MCF 10A (cell line): ENCODE measurements at regions of chr2 and their contacts with region 1.

Region 1: DNA sequence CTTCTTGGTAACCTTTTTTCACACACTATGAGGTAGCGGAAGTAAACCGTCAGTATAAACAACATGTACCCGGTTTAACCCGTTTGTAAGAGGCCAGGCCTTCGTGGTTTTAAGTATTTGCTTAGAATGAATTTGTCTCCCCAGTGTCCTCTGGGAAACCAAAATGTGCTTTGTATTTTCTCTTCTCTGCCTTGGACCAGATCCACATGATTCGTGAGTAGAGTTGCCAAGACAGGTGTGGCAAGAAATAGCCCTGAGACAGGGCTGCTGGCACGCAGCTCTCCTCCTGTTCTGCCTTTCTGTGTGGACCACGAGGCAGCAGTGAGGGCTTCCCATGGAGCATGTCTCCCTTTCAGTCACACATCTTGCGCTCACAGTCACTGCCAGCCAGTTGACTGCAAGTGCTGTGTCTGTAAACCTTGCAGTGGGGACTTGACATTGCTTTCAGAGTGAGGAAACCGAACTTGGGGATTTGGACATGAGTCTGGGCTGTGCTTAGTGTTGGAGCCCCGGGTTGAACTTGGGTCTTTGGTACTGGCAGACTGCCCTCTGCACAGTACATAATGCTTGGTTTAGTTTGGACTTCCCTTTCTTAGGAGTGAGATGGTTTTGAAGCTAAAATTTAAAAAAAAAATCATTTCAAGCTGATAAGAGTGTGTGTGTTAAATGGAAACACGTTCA is 19.1 kb downstream of the BCL2L11 start:
- DNase-seq: peak; percentile 77
- H3K4me3 Mint-ChIP-seq: no peak overlapping the region
- H3K27ac Mint-ChIP-seq: peak overlapping the region; percentile 42
- H3K4me1 Mint-ChIP-seq: peaks cover 21% of the 10 kb centered on the region
- H3K27me3 Mint-ChIP-seq: no peaks in the 10 kb centered on the region
- CTCF ChIP-seq: no peak

Region 2: DNA sequence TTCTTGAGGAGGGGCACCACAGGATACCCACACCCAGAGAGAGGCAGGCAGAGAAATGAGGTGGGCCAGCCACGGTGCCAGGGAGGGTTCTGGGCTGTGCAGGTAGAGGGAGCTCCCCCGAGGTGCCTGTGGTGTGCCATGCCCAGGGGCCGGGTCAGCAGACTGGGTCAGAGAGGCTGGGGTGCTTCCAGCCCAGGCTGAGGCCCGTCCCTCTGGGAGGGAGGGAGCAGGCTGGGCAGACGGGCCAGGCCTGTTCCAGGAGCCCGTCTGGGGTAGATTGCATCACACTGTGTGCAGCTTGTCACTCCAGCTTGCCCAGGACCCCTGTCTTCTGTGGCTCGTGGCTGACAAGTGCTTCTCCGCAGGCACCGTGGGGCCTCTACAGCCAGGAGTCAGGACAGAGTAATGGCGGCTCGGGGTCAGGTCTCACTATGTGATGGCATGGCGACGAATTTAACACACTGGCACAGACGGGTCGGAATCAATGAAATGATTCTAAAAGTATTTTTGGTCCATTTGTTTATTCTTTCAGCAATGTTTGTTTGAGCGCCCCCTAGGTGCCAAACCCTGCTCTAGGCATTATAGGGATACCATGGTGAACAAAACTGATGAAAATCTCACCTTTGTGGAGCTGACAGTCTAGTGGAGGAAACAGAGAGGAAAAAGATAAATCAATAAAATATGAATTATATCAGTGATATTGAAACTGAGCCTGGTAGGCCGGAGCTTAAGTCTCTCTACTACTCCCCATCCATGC is 263.4 kb before region 1 on chr2:
- CTCF ChIA-PET with region 1: no interaction called
- POLR2A ChIA-PET with region 1: no interaction called
- intact Hi-C with region 1: no loop called
- DNase-seq: no peak
- H3K4me3 Mint-ChIP-seq: no peak overlapping the region
- H3K27ac Mint-ChIP-seq: no peak overlapping the region
- H3K4me1 Mint-ChIP-seq: no peaks in the 10 kb centered on the region
- H3K27me3 Mint-ChIP-seq: peaks cover 28% of the 10 kb centered on the region
- CTCF ChIP-seq: peak; percentile 11

Region 3: DNA sequence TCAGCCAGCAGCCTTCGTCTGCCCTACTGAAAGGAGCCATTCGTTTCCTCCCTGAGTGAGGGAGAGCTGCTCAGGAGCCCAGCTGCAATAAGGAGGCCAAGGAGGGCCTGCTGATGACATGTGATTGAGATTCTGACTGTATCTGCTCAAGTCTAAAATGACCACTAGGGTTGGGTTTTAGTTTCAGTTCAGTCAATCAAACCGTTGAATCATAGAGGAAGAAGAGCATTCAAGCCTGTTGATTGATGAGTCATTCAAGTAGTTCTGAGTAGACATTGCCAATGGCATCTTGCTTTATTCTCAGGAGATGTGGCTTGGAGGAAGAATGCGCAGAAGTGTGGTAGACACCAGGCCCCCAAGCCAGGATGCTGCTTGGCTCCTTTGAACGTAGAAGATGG is 39.0 kb before region 1 on chr2:
- CTCF ChIA-PET with region 1: no interaction called
- POLR2A ChIA-PET with region 1: no interaction called
- intact Hi-C with region 1: no loop called
- DNase-seq: peak; percentile 54
- H3K4me3 Mint-ChIP-seq: no peak overlapping the region
- H3K27ac Mint-ChIP-seq: no peak overlapping the region
- H3K4me1 Mint-ChIP-seq: peaks cover 6% of the 10 kb centered on the region
- H3K27me3 Mint-ChIP-seq: peaks cover 3% of the 10 kb centered on the region
- CTCF ChIP-seq: no peak

Region 4: DNA sequence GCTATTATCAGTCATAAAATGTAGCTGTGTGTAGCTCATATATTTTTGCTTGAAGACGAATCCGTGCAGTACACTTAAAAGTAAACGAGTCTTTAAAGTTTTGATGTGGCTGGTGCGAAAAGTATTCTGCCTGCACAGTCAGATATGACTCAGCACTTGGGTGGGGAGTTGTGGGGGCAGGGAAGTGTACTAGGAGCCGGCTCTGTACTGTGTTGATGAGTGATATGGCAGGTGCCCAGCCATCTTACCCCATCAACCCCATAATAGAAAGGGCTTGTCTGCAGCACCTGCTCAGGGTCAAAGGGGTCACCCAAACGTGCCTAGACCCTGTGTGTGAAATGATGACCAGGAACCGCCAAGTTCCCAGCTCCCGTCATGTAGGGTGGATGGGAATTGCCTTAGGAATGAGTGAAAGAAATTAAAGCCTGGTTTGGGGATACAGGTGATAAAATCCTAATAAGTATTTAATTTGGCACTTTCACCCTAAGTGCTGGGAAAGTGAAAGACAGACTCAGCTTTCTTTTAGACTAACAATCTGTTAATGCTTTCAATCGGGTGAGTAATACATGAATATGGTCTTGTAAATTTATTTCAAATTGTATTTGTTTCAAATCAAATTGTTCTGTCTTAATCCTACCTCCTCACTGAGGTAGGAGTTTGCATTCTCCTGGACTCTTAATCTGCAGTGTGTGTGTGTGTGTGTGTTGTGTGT is 28.9 kb after region 1 on chr2:
- CTCF ChIA-PET with region 1: no interaction called
- POLR2A ChIA-PET with region 1: interaction called, 11 read pairs
- intact Hi-C with region 1: no loop called
- DNase-seq: peak; percentile 76
- H3K4me3 Mint-ChIP-seq: peak overlapping the region; percentile 14
- H3K27ac Mint-ChIP-seq: no peak overlapping the region
- H3K4me1 Mint-ChIP-seq: peaks cover 22% of the 10 kb centered on the region
- H3K27me3 Mint-ChIP-seq: no peaks in the 10 kb centered on the region
- CTCF ChIP-seq: no peak